Stomach (tissue), 19 donors: ENCODE measurements at regions of chr5 and their contacts with region 1.

Region 1: DNA sequence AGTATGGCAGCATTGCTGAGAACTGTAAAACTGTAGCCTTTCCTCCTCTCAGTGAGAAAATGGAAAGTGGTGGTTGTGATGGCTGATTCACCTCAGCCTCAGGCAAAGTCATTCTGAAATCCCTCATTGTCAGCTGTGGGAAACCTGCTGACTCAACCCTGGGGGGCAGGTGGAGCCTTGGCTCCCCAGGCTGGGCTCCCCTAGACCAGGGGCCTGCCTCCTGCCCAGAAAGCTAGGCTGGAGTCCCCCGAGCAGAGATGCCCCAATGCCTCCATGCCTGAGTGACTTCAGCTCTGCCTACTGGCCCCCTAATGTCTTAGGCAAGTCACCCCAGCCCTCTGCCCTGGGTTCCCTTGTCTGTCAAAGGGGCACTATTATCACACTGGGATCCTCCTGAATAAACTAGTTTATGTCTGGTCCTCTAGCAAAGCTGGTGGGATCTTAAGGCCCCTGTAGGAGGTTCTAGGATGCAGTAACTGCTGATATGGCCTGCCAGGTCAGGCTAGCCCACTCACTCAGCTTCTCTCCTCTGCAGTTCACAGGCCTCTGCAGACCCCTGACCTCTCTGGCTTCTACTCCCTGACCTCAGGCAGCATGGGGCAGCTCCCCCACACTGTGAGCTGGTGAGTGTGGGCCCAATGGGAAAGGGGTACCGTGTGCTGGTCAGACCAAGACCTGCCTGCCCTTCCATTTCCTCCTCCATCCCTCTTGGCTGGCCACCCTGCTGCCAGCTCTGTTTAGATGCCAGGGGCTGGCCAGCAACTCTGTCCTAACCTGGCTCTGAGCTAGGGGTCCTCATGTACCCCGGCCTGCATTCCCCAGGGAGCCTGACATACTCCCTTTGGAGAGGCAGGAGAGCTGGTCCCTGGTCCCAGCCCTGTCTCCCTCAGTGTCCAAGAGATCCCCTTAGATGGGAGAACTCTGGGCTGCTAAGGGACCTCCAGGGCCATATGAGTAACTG is 24.2 kb downstream of the TCF7 start:
- DNase-seq: peak in 1 of 2 donors; percentile 22
- H3K4me3 ChIP-seq: no peak overlapping the region
- H3K27ac ChIP-seq: peak overlapping the region in 1 of 5 donors; percentile 8
- H3K4me1 ChIP-seq: peaks cover 0 to 23% (median 8%) of the 10 kb centered on the region in 4 donors
- H3K27me3 ChIP-seq: no peaks in the 10 kb centered on the region
- CTCF ChIP-seq: no peak
- EP300 ChIP-seq: no peak
- POLR2A ChIP-seq: no peak

Region 2: GRCh38 chr5:134041570-134042411 is 96.9 kb before region 1 on chr5:
- intact Hi-C with region 1: loop called (anchors 5 kb)
- DNase-seq: no peak
- H3K4me3 ChIP-seq: no peak overlapping the region
- H3K27ac ChIP-seq: no peak overlapping the region
- H3K4me1 ChIP-seq: peaks cover 0 to 3% (median 0%) of the 10 kb centered on the region in 4 donors
- H3K27me3 ChIP-seq: no peaks in the 10 kb centered on the region
- CTCF ChIP-seq: no peak
- EP300 ChIP-seq: no peak
- POLR2A ChIP-seq: no peak

Region 3: GRCh38 chr5:134101686-134102439 is 36.8 kb before region 1 on chr5:
- intact Hi-C with region 1: loop called (anchors 5 kb)
- DNase-seq: peak; percentile 67 to 76
- H3K4me3 ChIP-seq: no peak overlapping the region
- H3K27ac ChIP-seq: no peak overlapping the region
- H3K4me1 ChIP-seq: peaks cover 0 to 33% (median 19%) of the 10 kb centered on the region in 4 donors
- H3K27me3 ChIP-seq: no peaks in the 10 kb centered on the region
- CTCF ChIP-seq: peak in 5 of 7 experiments; percentile 29 to 89 (median 83)
- EP300 ChIP-seq: no peak
- POLR2A ChIP-seq: no peak